Left cardiac atrium (tissue), 4 donors: ENCODE measurements at regions of chr20 and their contacts with region 1.

Region 1: DNA sequence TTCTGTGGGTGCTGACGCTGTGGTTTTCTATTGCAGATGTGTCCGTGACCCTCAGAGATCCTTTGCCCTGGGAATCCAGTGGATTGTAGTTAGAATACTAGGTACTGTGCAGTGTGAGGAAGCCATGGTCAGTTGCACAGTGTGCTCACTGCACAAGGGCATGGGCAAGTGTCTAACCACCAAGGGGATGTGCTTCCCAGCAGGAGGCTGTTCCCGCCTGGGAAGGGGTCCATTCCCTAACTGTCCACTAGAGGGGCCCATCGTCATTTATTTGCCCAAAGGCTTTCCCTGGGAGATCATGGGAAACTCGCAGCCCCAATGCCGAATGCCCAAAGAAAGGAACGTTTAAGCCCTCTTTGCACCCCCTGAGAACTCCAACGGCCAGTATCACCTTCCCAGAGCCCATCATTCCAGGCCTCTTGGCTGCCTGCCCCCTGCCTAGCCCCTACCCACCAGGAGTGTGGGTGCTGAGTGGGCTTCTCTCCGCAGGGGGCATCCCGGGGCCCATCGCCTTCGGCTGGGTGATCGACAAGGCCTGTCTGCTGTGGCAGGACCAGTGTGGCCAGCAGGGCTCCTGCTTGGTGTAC is 26.2 kb downstream of the SLCO4A1 start:
- DNase-seq: peak; percentile 74
- ATAC-seq: peak; percentile 62 to 72

Region 2: GRCh38 chr20:62551407-62552323 is 116.9 kb before region 1 on chr20:
- intact Hi-C with region 1: no loop called
- DNase-seq: no peak
- ATAC-seq: no peak

Region 3: GRCh38 chr20:62616728-62617621 is 51.6 kb before region 1 on chr20:
- intact Hi-C with region 1: no loop called
- DNase-seq: peak; percentile 82
- ATAC-seq: peak; percentile 79 to 87

Region 4: GRCh38 chr20:62768481-62769287 is 100.2 kb after region 1 on chr20:
- intact Hi-C with region 1: no loop called
- DNase-seq: peak; percentile 20
- ATAC-seq: peak in 1 of 2 donors; percentile 72

Region 5: DNA sequence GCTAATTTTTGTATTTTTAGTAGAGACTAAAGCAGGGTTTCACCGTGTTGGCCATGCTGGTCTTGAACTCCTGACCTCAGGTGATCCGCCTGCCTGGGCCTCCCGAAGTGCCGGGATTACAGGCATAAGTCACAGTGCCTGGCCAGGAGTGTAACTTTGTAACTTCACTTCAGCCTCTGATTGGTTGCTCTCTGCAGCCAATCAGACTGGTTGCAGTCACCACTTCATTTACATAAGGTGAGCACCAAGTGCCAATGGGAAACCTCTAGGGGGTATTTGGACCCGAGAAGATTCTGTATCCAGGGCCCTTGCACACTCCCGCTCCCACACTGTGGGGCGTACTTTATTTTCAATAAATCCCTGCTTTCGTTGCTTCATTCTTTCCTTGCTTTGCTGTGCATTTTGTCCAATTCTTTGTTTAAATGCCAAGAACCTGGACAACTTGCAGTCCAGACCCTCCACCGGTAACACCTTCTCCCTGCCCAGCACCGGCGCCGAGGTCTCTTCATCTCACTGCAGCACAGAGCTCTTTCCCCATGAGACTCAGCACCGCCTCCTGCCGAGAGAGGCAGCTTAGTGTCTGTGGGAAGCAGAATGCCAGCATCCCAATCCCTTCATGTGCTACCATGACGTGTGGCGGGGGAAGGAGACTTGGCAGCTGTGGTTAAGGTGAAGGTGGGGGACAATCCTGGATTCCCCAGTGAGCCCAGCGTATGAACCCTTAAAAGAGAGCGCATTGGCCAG is 113.8 kb after region 1 on chr20:
- intact Hi-C with region 1: loop called in 1 of 2 experiments (anchors 5 kb)
- DNase-seq: no peak
- ATAC-seq: no peak

Region 6: DNA sequence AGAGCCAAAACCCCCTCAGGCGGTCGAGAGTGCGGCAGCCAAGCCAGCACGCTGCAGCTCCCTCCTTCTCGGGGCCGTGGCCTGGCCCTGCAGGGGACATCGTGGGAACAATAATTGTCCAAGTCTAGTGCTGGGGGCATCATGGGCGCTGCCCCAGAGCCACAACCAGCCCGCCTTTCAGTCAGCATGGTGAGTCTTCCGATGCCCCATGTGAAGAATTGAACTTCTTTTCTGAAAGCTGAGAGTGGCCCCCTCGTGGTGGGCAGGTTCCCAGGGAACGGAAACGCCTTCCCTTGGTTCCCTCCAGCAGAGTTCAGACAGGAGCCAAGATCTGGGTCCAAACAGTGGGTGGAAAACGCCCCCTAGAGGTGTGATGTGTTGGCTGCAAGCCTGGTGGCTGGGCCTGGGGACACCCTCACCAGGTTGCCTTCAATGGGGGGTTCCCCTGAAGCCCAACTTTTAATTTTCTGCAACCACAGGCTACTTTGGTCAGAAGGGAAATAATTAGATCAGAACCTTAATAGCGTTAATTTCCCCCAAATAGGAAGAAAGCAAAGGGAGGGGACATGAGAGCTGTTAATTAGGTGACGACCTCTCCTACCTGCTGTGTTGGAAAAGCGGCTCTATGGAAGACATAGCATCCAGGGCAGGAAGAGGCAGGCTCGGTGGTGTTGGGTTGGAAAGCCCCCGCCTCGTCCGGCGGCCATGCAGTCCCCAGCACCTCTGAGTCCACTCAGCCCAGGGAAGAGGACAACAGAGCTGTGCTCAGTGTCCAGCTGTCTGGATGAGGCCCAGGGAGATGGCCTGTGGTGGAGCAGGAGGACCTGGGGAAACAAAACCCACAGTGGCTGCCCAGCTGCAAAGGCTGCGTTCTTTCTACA is 123.0 kb after region 1 on chr20:
- intact Hi-C with region 1: loop called (anchors 2 to 5 kb)
- DNase-seq: peak; percentile 83
- ATAC-seq: peak in 1 of 2 donors; percentile 1

Region 7: GRCh38 chr20:62808211-62808865 is 139.8 kb after region 1 on chr20:
- intact Hi-C with region 1: loop called (anchors 5 kb)
- DNase-seq: peak; percentile 66
- ATAC-seq: peak in 1 of 2 donors; percentile 41

Region 8: DNA sequence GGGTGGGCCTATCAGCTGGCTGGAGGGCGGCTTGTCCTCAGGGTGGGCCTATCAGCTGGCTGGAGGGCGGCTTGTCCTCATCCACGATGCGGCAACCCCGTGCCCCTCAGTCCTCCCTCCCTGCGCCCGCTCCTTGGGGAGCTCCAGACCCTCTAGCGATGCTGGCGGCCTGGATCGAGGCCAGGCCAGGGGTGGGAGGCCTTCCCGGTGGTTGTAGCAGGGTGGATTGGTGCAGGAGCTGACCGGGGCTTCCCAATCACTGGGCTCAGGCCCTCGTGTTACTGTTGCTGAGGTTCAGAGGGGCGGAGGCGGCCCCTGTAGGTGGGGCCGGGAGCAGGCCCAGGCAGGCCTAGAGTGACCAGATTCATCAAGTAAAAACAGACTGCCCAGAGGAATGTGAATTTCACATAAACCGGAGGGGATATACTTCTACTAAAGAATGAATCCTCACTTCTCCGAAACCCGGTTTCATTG is 292.8 kb after region 1 on chr20:
- intact Hi-C with region 1: no loop called
- DNase-seq: no peak
- ATAC-seq: no peak